Activated CD4-positive, alpha-beta memory T cell treated with anti-CD3 and anti-CD28 coated beads, Interleukin-2, amount 10 ng/mL, durations not matched to agents 7 days and 5 days (primary cell): ENCODE measurements at regions of chr14 and their contacts with region 1.

Region 1: GRCh38 chr14:74018586-74019407 is at the starts of genes BBOF1 and ENTPD5:
- DNase-seq: peak; percentile 87
- H3K4me3 Mint-ChIP-seq: peak within 1 kb of the TSS; percentile 93
- H3K27ac Mint-ChIP-seq: peak within 1 kb of the TSS; percentile 93
- H3K4me1 Mint-ChIP-seq: peaks cover 24% of the 10 kb centered on the region
- H3K27me3 Mint-ChIP-seq: no peaks in the 10 kb centered on the region
- total RNA-seq, gene BBOF1: 0.50 to 1.3 TPM
- total RNA-seq, gene ENTPD5: 10.5 to 11.1 TPM

Region 2: GRCh38 chr14:73913256-73913655 is 105.5 kb before region 1 on chr14:
- CTCF ChIA-PET with region 1: no interaction called
- POLR2A ChIA-PET with region 1: no interaction called
- DNase-seq: no peak
- H3K4me3 Mint-ChIP-seq: no peak overlapping the region
- H3K27ac Mint-ChIP-seq: no peak overlapping the region
- H3K4me1 Mint-ChIP-seq: peaks cover 6% of the 10 kb centered on the region
- H3K27me3 Mint-ChIP-seq: no peaks in the 10 kb centered on the region

Region 3: GRCh38 chr14:73961192-73961591 is 57.6 kb before region 1 on chr14:
- CTCF ChIA-PET with region 1: no interaction called
- POLR2A ChIA-PET with region 1: no interaction called
- DNase-seq: no peak
- H3K4me3 Mint-ChIP-seq: no peak overlapping the region
- H3K27ac Mint-ChIP-seq: no peak overlapping the region
- H3K4me1 Mint-ChIP-seq: no peaks in the 10 kb centered on the region
- H3K27me3 Mint-ChIP-seq: no peaks in the 10 kb centered on the region

Region 4: GRCh38 chr14:74084277-74085046 is 65.7 kb after region 1 on chr14 and contains the starts of genes ALDH6A1 and LIN52:
- CTCF ChIA-PET with region 1: no interaction called
- POLR2A ChIA-PET with region 1: interaction called, 13 read pairs
- DNase-seq: peak; percentile 100
- H3K4me3 Mint-ChIP-seq: peak within 1 kb of the TSS; percentile 91
- H3K27ac Mint-ChIP-seq: peak within 1 kb of the TSS; percentile 89
- H3K4me1 Mint-ChIP-seq: peaks cover 50% of the 10 kb centered on the region
- H3K27me3 Mint-ChIP-seq: no peaks in the 10 kb centered on the region
- total RNA-seq, gene ALDH6A1: 16.8 to 18.2 TPM
- total RNA-seq, gene LIN52: 14.5 to 17.6 TPM